Activated CD8-positive, alpha-beta T cell treated with anti-CD3 and anti-CD28 coated beads, Interleukin-2, amount 10 ng/mL, durations not matched to agents 7 days and 5 days (primary cell): ENCODE measurements at regions of chr14 and their contacts with region 1.

Region 1: GRCh38 chr14:32560209-32560857 is 231.2 kb downstream of the AKAP6 start:
- DNase-seq: peak; percentile 57
- ATAC-seq: peak; percentile 60
- H3K4me3 Mint-ChIP-seq: no peak overlapping the region
- H3K27ac Mint-ChIP-seq: no peak overlapping the region
- H3K4me1 Mint-ChIP-seq: peaks cover 14% of the 10 kb centered on the region
- H3K27me3 Mint-ChIP-seq: no peaks in the 10 kb centered on the region

Region 2: DNA sequence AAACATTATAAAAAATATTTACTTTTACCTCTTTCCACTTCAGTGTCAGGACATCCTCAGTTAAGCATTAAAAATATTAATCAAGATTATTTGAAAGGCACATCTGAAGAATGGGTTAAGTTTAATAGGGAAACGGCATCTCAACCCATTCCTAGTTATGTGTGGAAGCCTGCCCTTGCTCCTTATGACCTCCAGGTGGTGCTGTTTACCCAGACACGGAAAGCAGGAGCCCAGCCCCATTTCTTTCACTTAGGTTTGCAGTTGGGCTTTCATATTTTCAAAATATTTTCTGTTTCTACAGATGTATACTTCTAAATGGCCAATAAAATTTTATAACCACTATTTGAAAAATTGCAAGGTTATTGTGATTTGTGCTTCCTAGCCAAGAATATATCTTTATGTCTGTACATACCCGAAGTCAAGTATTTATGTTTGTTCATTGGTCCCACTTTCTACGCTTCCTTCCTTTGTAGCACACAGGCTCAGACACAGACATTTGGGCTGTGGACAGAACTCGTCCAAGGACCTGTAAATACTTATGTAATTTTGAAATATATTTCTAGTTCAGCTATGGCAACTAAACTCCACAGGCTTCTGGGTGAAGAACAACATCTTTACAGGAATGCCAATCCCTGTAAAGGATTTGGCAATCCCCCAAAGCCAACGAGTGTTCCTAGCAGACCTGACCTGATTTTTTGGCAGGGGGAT is 15.9 kb after region 1 on chr14:
- CTCF ChIA-PET with region 1: interaction called, 10 read pairs
- POLR2A ChIA-PET with region 1: no interaction called
- DNase-seq: peak; percentile 55
- ATAC-seq: peak; percentile 74
- H3K4me3 Mint-ChIP-seq: no peak overlapping the region
- H3K27ac Mint-ChIP-seq: no peak overlapping the region
- H3K4me1 Mint-ChIP-seq: no peaks in the 10 kb centered on the region
- H3K27me3 Mint-ChIP-seq: peaks cover 12% of the 10 kb centered on the region